ENCODE measurements at regions of chr3 and their contacts with region 1.

Region 1: DNA sequence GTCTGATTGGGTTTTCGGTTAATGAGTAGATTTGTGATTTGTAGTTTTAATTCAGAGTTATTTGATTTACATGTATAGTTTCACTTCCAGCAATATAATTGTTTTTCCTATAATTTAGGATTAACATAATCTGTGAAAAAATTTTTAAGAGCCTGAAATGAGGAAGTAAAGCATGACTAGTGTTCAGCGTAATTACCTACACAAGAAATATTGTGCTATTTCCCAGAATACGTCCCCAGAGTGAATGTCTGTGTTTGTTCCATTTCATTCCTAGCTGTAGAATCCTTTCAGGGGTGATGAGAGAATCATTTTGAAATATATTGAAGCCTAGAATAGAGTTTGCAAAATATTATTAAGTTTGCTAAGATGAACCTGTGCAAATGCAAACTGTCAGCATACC is 247.1 kb downstream of the BBX start:
- DNase-seq: no peak
- ATAC-seq: no peak
- H3K4me3 ChIP-seq: no peak overlapping the region
- H3K27ac ChIP-seq: no peak overlapping the region
- H3K4me1 ChIP-seq: peaks cover 1% of the 10 kb centered on the region; the same call in 1 of the 2 replicates
- H3K27me3 ChIP-seq: no peaks in the 10 kb centered on the region
- CTCF ChIP-seq: no peak
- POLR2A ChIP-seq: no peak
- RAD21 ChIP-seq: no peak

Region 2: DNA sequence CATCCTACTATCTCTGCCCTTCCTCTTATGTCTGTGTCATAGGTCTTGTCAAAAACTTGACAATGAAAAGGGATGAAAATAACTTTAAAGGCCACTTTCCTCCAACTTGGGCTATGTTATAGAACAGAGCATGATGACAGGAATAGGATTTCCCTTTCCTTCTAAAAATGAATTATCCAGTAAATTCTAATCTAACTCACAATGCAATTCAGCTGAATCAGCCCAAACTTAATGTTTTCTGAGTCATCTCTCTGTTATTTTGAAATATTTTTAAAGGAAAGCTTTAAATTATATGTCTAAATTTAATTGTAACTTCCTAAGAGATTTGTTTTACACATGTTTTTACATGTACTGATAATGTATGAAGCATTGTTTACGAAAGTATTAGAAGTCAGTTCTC is 11.4 kb after region 1 on chr3:
- CTCF ChIA-PET with region 1: no interaction called
- POLR2A ChIA-PET with region 1: no interaction called
- dilution Hi-C with region 1: no loop called
- in situ Hi-C with region 1: no loop called
- intact Hi-C with region 1: loop called (anchors 1 kb)
- DNase-seq: peak; percentile 8
- ATAC-seq: no peak; the same call in 1 of the 2 replicates
- H3K4me3 ChIP-seq: no peak overlapping the region
- H3K27ac ChIP-seq: no peak overlapping the region
- H3K4me1 ChIP-seq: peaks cover 2% of the 10 kb centered on the region
- H3K27me3 ChIP-seq: no peaks in the 10 kb centered on the region
- CTCF ChIP-seq: no peak
- POLR2A ChIP-seq: no peak
- RAD21 ChIP-seq: no peak

Region 3: DNA sequence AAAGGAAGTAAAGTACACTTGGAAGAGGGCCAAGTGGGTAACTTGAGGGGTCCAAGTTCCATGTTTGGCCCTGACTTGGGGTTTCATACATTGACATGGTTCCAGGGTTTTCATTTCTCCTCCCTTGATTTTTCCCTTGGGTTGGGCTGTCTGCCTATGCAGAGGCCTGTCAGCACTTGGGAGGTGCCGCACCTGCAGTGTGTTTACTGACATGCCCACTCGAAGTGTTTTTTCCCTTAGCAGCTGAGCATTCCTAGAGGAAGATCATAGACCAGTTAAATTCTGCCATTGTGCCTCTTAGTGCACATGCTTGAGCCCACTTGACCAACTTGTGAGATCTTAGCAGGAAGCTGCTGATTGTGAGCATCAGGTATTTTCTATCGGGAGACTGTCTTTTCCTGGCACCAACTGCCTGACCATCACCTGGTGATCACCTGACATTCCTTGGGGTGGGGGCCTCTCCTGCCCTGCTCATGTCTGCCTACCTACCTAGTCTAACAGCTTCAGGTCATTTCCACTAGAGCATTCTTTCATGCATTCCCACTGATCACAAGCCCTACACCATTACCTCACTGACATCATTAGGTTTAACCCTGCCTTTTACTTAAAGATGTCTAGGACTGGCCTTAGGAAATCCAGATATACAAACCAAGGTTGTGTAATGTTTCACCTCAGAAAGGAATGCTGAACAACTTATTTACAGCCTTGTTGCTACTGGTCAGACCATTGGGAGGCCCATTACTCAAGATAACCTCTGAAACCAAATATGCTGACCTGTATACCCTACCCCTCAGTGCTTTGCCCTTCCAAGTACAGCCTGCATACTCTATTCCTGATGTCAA is 252.6 kb after region 1 on chr3:
- CTCF ChIA-PET with region 1: no interaction called
- POLR2A ChIA-PET with region 1: no interaction called
- dilution Hi-C with region 1: no loop called
- in situ Hi-C with region 1: no loop called
- intact Hi-C with region 1: no loop called
- DNase-seq: no peak
- ATAC-seq: peak; percentile 14; the same call in 1 of the 2 replicates
- H3K4me3 ChIP-seq: no peak overlapping the region
- H3K27ac ChIP-seq: no peak overlapping the region
- H3K4me1 ChIP-seq: no peaks in the 10 kb centered on the region
- H3K27me3 ChIP-seq: peaks cover 11% of the 10 kb centered on the region
- CTCF ChIP-seq: no peak
- POLR2A ChIP-seq: no peak
- RAD21 ChIP-seq: no peak

Measured in IMR-90 (cell line).